AG04449 (cell line): ENCODE measurements at regions of chr12 and their contacts with region 1.

Region 1: GRCh38 chr12:49061157-49061650 is 610 bp upstream of the KMT2D start:
- DNase-seq: no peak
- H3K4me3 ChIP-seq: peak overlapping the region; percentile 84
- CTCF ChIP-seq: no peak

Region 2: DNA sequence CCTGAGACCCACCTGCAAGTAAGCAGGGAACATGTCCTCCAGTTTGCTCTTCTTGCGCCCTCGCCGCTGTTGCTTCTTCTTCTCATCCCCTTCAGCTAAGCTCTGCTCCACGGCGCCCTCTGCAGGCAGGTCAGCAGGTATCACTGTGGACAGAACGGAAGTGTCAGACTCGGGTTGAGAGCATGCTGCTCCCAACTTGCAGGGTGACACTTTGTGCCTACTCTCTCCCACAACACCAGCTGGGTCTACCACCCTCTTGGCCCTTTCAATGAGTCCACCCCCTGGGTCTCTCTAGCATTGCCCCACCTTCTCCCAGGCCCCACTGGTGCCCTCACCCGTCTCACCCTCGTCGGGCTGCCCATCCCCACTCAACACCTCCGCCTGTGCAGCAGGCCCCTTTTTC is 17.3 kb before region 1 on chr12:
- CTCF ChIA-PET with region 1: interaction called, 48 read pairs
- POLR2A ChIA-PET with region 1: no interaction called
- DNase-seq: no peak
- H3K4me3 ChIP-seq: no peak overlapping the region
- CTCF ChIP-seq: peak; percentile 76

Region 3: GRCh38 chr12:49049566-49050413 is 11.4 kb before region 1 on chr12:
- CTCF ChIA-PET with region 1: interaction called, 48 read pairs
- POLR2A ChIA-PET with region 1: interaction called, 3 read pairs
- DNase-seq: no peak
- H3K4me3 ChIP-seq: no peak overlapping the region
- CTCF ChIP-seq: no peak

Region 4: GRCh38 chr12:49098035-49098451 is 36.8 kb after region 1 on chr12:
- CTCF ChIA-PET with region 1: interaction called, 58 read pairs
- POLR2A ChIA-PET with region 1: no interaction called
- DNase-seq: no peak
- H3K4me3 ChIP-seq: no peak overlapping the region
- CTCF ChIP-seq: peak; percentile 69

Region 5: GRCh38 chr12:49110464-49111155 is 49.4 kb after region 1 on chr12 and contains the start of gene LMBR1L:
- CTCF ChIA-PET with region 1: interaction called, 53 read pairs
- POLR2A ChIA-PET with region 1: no interaction called
- DNase-seq: peak; percentile 88
- H3K4me3 ChIP-seq: peak within 1 kb of the TSS; percentile 87
- CTCF ChIP-seq: peak; percentile 62

Region 6: GRCh38 chr12:49121047-49121696 is 60.0 kb after region 1 on chr12:
- CTCF ChIA-PET with region 1: interaction called, 95 read pairs
- POLR2A ChIA-PET with region 1: no interaction called
- DNase-seq: no peak
- H3K4me3 ChIP-seq: no peak overlapping the region
- CTCF ChIP-seq: peak; percentile 65

Region 7: GRCh38 chr12:49198431-49199155 is 137.4 kb after region 1 on chr12:
- CTCF ChIA-PET with region 1: no interaction called
- POLR2A ChIA-PET with region 1: no interaction called
- DNase-seq: no peak
- H3K4me3 ChIP-seq: no peak overlapping the region
- CTCF ChIP-seq: no peak

Region 8: GRCh38 chr12:49232940-49233841 is 172.0 kb after region 1 on chr12:
- CTCF ChIA-PET with region 1: interaction called, 24 read pairs
- POLR2A ChIA-PET with region 1: no interaction called
- DNase-seq: no peak
- H3K4me3 ChIP-seq: peak overlapping the region; percentile 1
- CTCF ChIP-seq: peak; percentile 16